HCT116 (cell line): ENCODE measurements at regions of chr10 and their contacts with region 1.

Region 1: DNA sequence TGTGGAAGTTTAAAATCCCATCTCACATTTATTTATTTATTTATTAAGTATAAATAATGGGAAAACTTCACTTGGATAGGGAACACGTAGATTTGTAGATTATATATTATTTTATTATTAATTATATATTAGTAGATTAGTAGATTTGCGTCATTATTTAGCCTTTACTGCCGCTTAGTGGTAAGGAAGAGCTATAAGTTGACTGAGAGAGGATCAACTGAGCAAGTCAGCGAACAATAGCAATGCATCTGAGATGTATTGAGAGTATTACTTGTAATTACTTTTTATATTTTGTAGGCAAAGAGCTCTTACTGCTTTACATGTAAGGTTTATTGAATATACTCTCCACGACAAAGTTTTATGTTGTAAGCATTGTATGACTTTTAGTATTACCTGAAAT is 244.5 kb upstream of the ANKRD30A start:
- DNase-seq: no peak
- ATAC-seq: no peak
- H3K4me3 ChIP-seq: no peak overlapping the region
- H3K27ac ChIP-seq: no peak overlapping the region
- H3K4me1 ChIP-seq: no peaks in the 10 kb centered on the region
- H3K27me3 ChIP-seq: no peaks in the 10 kb centered on the region
- CTCF ChIP-seq: 0 out of 6 replicates have a peak, but pooled peaks of 1 of the 3 experiments have one; percentile 6
- POLR2A ChIP-seq: no peak
- RAD21 ChIP-seq: peak; percentile 23; the same call in 1 of the 2 replicates

Region 2: DNA sequence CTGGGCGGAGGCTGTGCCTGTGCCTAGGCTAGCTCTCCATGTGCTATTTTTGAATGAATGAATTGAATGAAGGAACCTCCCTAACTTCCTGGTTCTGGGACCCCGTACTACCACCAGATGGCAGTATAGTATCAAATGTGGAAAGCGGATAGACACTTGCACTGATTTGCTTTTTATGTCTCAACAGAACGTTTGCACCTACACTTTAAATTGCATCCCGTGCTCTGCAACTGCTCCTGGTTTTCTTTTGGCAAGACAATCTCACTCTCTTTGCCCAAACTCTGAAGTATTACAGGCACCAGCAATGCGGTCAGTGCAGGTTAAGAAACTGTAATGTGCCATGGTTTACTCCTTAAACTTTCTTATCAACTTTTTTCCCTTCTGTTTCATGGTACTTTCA is 1245.3 kb before region 1 on chr10:
- CTCF ChIA-PET with region 1: interaction called, 5 read pairs
- POLR2A ChIA-PET with region 1: no interaction called
- RAD21 ChIA-PET with region 1: no interaction called
- intact Hi-C with region 1: loop called (anchors 1 kb)
- DNase-seq: peak; percentile 57
- ATAC-seq: peak; percentile 93
- H3K4me3 ChIP-seq: no peak overlapping the region
- H3K27ac ChIP-seq: no peak overlapping the region
- H3K4me1 ChIP-seq: no peaks in the 10 kb centered on the region
- H3K27me3 ChIP-seq: peaks cover 9% of the 10 kb centered on the region
- CTCF ChIP-seq: peak; percentile 55 to 92 (median 84)
- POLR2A ChIP-seq: no peak
- RAD21 ChIP-seq: peak; percentile 85

Region 3: GRCh38 chr10:37067576-37067975 is 186.7 kb after region 1 on chr10:
- CTCF ChIA-PET with region 1: no interaction called
- POLR2A ChIA-PET with region 1: no interaction called
- RAD21 ChIA-PET with region 1: no interaction called
- intact Hi-C with region 1: no loop called
- DNase-seq: no peak
- ATAC-seq: no peak
- H3K4me3 ChIP-seq: no peak overlapping the region
- H3K27ac ChIP-seq: no peak overlapping the region
- H3K4me1 ChIP-seq: no peaks in the 10 kb centered on the region
- H3K27me3 ChIP-seq: no peaks in the 10 kb centered on the region
- CTCF ChIP-seq: no peak
- POLR2A ChIP-seq: no peak
- RAD21 ChIP-seq: no peak